ENCODE measurements at regions of chr6 and their contacts with region 1.

Region 1: GRCh38 chr6:13336553-13336952 is 8.2 kb upstream of the TBC1D7 start:
- DNase-seq: peak; percentile 60 to 76
- ATAC-seq: peak; percentile 84

Region 2: DNA sequence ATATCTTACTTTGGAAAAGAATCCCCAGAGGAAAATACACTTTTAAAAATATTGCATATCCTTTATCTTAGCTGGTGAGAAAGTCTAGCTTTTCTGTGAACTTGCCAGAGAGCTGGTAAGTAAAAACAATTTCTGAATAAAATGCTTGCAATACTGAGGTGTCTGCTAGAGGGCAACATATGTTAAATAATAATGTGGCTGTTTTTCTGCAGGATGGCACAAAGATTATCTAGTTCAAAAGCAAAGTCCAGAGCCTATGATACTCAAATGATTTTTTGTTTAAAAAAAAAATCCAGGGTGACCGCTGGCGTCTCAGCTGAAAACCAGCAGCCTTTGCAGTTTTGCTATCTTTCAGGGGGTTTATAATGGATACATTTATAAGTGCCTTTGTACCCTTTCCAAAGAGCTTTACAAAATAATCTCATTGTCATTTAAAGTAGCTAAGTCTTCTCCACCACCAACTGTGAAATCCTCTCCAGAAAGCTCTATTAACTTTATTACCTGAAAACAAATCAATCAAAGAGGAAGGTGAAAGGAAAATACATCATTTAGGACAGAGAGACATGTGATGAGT is 425.1 kb before region 1 on chr6:
- intact Hi-C with region 1: loop called in 1 of 2 experiments (anchors 10 kb)
- DNase-seq: no peak
- ATAC-seq: no peak

Region 3: DNA sequence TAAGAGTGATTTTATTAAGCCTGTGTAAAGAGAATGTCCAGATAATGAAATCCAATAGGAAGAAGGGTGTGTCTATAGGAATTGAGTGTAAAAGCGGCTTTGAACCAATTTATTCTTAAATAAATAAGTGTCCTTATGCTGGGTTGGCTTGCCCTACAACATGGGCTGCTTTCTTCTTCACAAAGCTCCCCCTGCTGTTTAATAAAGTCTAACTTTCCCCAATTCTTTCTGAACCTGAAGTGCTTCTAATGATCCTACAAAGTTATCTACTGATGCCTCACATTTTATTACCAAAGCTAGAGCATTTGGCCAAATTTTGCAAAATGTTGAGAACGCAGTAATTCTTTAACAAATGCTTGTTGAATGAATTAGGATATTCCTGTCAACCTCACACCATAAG is 201.5 kb after region 1 on chr6:
- intact Hi-C with region 1: loop called in 1 of 2 experiments (anchors 5 kb)
- DNase-seq: no peak
- ATAC-seq: peak; percentile 71